Uterus (tissue), 4 donors: ENCODE measurements at regions of chr7 and their contacts with region 1.

Region 1: GRCh38 chr7:82572195-82572880 is 128.8 kb upstream of the CACNA2D1 start:
- DNase-seq: peak; percentile 80 to 86
- H3K4me3 ChIP-seq: no peak overlapping the region
- H3K27ac ChIP-seq: no peak overlapping the region
- H3K4me1 ChIP-seq: no peaks in the 10 kb centered on the region
- H3K27me3 ChIP-seq: no peaks in the 10 kb centered on the region
- CTCF ChIP-seq: peak; percentile 66 to 92 (median 83)
- POLR2A ChIP-seq: no peak

Region 2: DNA sequence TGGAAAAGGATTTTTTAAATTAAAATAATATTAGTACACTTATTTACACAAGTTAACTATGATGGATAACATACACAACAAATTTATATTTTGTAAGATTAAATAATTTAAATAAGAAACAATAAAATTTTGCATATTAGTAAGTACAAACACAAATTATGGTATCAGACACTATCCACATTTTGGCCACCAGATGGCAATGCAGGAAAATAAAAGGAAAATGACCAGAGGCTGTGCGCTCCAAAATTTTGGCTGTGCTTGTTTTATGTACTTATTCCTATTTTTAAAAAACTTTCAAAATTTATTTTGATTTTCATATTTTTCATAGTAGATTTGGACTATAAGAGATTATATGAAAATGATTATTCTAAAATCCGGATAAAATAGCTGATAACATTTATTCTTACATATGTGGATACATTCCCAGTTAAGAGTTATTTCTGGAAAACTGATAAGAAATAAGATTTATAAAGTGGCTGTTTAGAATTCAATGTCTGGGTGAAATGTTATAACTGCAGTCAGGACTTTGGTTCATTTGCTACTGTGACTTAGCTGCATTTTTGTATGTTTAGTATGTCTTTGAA is 527.7 kb before region 1 on chr7:
- intact Hi-C with region 1: loop called (anchors 10 kb)
- DNase-seq: peak in 1 of 2 donors; percentile 46
- H3K4me3 ChIP-seq: no peak overlapping the region
- H3K27ac ChIP-seq: no peak overlapping the region
- H3K4me1 ChIP-seq: no peaks in the 10 kb centered on the region
- H3K27me3 ChIP-seq: no peaks in the 10 kb centered on the region
- CTCF ChIP-seq: peak; percentile 62 to 80 (median 66)
- POLR2A ChIP-seq: no peak